Cardiac septum (tissue), 1 donor: ENCODE measurements at regions of chr11 and their contacts with region 1.

Region 1: DNA sequence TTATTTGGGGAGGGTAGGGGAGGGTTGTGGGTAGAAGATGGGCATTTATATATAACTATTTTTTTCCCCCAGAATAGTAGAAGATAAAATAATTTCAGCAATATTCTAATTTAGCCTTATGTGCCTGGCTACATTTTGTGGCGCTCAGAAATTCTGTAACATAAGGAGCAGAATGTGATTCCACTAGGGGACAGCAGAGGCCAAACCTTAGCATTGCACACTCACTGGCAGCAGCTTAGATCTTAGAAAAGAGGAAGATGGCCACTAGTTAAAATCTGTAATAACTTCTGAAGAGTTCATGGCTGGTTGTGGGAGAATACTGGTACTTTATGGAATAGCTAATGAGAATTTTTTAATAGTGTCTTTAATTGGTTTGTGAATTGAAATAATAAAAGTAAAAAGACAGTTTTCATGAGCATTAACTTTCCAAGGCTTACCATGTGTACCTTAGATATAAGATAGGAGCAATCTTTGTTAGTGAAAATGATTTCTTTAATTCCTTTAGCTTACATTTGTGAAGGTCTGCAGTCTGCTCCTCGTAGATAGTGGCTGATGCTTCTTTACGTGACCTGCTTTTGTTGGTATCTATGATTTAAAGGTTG is 33.1 kb downstream of the DDX10 start:
- DNase-seq: no peak

Region 2: GRCh38 chr11:108751444-108751843 is 53.5 kb after region 1 on chr11:
- intact Hi-C with region 1: no loop called
- DNase-seq: no peak

Region 3: GRCh38 chr11:108871152-108871551 is 173.2 kb after region 1 on chr11:
- intact Hi-C with region 1: loop called (anchors 10 kb)
- DNase-seq: no peak

Region 4: DNA sequence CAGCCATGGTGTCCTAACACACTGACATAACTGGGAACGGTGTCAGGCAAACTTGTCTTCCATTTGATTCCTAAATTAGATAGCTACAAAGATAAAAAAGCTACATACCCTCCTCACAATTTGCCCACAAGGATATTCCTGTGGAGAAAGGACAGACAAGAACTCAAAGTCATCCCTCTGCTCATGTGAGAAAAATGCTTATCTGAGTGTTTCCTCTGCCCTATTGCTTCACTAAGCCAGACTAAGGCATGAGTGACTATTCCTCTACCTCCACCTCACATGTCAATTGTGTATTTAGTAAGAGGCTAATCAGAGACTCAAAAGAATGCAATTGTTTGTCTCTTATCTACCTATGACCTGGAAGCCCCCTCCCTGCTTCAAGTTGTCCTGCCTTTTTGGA is 214.6 kb after region 1 on chr11:
- intact Hi-C with region 1: no loop called
- DNase-seq: no peak

Region 5: GRCh38 chr11:109697140-109697843 is 999.3 kb after region 1 on chr11:
- intact Hi-C with region 1: loop called (anchors 5 kb)
- DNase-seq: no peak

Region 6: GRCh38 chr11:109939166-109939810 is 1241.3 kb after region 1 on chr11:
- intact Hi-C with region 1: loop called (anchors 10 kb)
- DNase-seq: no peak